ENCODE measurements at regions of chr10 and their contacts with region 1.

Region 1: GRCh38 chr10:48656241-48656913 is 28.3 kb upstream of the WDFY4 start:
- H3K4me3 ChIP-seq: peak overlapping the region; percentile 50
- H3K27ac ChIP-seq: no peak overlapping the region; the same call in 1 of the 2 replicates
- H3K4me1 ChIP-seq: no peaks in the 10 kb centered on the region
- CTCF ChIP-seq: peak; percentile 68

Region 2: DNA sequence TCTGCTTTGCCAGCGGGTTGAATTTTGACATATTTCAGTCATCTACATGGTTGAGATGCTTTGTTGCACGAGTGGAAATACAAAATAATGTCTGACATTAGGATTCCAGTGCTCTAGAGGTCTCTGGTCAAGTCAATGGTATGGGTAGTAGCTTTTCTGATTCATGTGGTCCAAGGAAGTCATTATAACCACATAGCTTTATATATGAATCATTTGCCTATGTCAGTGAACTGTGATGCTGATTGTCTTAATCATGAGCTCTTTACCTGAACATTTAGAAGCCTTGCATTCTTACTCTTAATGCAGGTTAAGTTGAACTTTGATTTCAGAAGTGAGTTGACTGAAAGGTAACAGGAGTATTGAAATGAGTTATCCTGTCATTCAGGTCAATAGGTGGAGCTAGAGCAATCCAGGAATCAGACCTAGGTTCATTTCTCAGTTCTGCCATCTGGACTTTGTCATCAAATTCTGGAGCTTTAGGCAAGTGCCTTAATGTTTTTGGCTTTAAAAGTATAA is 346.6 kb before region 1 on chr10:
- CTCF ChIA-PET with region 1: interaction called, 10 read pairs
- POLR2A ChIA-PET with region 1: no interaction called
- H3K4me3 ChIP-seq: no peak overlapping the region
- H3K27ac ChIP-seq: no peak overlapping the region
- H3K4me1 ChIP-seq: peaks cover 9% of the 10 kb centered on the region; the same call in 1 of the 2 replicates
- CTCF ChIP-seq: peak; percentile 23; the same call in 1 of the 2 replicates

Region 3: GRCh38 chr10:48506147-48506917 is 150.0 kb before region 1 on chr10:
- CTCF ChIA-PET with region 1: interaction called, 14 read pairs
- POLR2A ChIA-PET with region 1: no interaction called
- H3K4me3 ChIP-seq: no peak overlapping the region
- H3K27ac ChIP-seq: no peak overlapping the region
- H3K4me1 ChIP-seq: peaks cover 5% of the 10 kb centered on the region
- CTCF ChIP-seq: peak; percentile 57

Region 4: DNA sequence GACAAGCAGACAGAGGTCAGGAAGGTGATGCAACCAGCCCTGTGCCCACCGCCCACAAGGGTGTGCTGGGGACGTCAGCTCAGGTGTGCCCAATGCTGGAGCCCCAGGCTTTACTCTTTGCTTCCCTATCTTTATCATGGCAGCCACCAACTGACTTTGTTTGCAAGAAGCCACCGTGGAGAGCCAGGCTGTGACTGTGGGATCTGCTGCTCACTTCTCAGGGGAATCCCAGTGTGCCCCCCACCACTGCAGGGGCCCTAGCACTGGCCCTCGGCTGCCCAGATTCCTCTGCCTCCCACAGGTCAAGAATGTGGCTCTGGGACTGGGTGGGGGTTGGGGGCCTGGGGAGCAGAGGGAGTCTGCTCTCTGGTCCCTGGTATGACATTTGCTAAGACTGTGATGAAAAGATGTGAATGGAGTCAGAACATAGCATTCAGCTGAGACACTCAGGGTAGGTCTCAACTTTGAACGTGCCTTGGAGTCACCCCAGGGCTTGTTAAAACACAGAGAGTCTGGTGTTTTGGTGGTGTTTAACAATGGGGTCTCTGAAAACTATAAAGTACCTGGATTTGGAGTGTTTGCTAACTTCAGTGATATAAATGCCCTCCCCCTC is 98.8 kb before region 1 on chr10:
- CTCF ChIA-PET with region 1: interaction called, 139 read pairs
- POLR2A ChIA-PET with region 1: no interaction called
- H3K4me3 ChIP-seq: no peak overlapping the region
- H3K27ac ChIP-seq: no peak overlapping the region
- H3K4me1 ChIP-seq: no peaks in the 10 kb centered on the region
- CTCF ChIP-seq: no peak

Region 5: GRCh38 chr10:48634198-48634983 is 22.0 kb before region 1 on chr10:
- CTCF ChIA-PET with region 1: interaction called, 33 read pairs
- POLR2A ChIA-PET with region 1: no interaction called
- H3K4me3 ChIP-seq: no peak overlapping the region
- H3K27ac ChIP-seq: no peak overlapping the region
- H3K4me1 ChIP-seq: no peaks in the 10 kb centered on the region
- CTCF ChIP-seq: no peak

Region 6: DNA sequence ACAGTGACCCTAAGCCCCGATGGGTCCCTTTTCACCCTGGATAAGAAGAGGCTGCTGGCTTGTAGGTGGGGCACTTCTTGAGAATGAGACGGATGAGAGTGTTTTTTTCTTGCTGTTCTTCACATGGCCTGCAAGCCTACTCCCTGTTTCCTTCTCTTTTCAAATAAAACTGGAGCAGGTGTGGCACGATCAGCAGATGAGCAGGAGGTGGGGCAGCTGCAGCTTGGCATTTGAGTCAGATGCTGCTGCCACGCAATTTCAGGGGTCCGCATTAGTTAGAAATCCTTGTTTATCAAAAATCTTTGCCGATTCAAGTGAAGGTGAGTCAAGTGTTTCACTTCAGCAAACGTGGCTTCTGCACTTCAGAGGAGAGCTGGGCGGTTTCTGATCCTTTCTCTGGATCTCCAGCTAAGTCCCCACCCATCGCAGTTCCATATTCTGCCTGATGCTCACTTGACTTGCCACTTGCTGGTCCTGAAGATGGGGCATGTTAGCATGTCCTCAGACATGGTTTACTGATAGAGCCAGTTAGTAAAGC is 49.1 kb after region 1 on chr10:
- CTCF ChIA-PET with region 1: no interaction called
- POLR2A ChIA-PET with region 1: no interaction called
- H3K4me3 ChIP-seq: no peak overlapping the region
- H3K27ac ChIP-seq: no peak overlapping the region
- H3K4me1 ChIP-seq: no peaks in the 10 kb centered on the region
- CTCF ChIP-seq: no peak

Region 7: DNA sequence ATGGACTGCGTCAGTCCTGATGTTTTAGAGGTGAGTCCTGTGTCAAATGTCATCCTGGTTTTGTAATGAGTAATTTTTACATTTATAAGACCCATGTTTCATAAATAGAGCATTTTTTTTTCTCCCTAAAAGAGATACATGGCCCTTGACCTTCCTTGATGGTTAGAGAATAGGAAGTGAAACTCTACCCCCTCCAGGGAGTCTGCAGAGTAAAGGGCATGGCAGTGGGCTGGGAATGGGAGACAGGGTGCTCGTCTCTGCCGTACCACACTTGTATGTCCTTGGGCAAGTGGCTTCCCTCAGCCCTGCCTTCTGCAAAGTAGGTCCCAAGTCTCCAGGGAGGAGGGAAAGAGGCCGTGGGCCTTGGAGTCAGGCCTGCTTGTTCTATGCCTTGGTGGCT is 92.2 kb after region 1 on chr10:
- CTCF ChIA-PET with region 1: no interaction called
- POLR2A ChIA-PET with region 1: no interaction called
- H3K4me3 ChIP-seq: no peak overlapping the region
- H3K27ac ChIP-seq: no peak overlapping the region
- H3K4me1 ChIP-seq: no peaks in the 10 kb centered on the region
- CTCF ChIP-seq: no peak

Region 8: GRCh38 chr10:49407552-49408137 is 751.3 kb after region 1 on chr10:
- CTCF ChIA-PET with region 1: interaction called, 17 read pairs
- POLR2A ChIA-PET with region 1: no interaction called
- H3K4me3 ChIP-seq: no peak overlapping the region
- H3K27ac ChIP-seq: no peak overlapping the region
- H3K4me1 ChIP-seq: no peaks in the 10 kb centered on the region
- CTCF ChIP-seq: peak; percentile 84

Region 9: GRCh38 chr10:49579621-49580020 is 923.2 kb after region 1 on chr10:
- CTCF ChIA-PET with region 1: no interaction called
- POLR2A ChIA-PET with region 1: no interaction called
- H3K4me3 ChIP-seq: no peak overlapping the region
- H3K27ac ChIP-seq: no peak overlapping the region
- H3K4me1 ChIP-seq: no peaks in the 10 kb centered on the region
- CTCF ChIP-seq: no peak